A549 (cell line): ENCODE measurements at regions of chr14 and their contacts with region 1.

Region 1: DNA sequence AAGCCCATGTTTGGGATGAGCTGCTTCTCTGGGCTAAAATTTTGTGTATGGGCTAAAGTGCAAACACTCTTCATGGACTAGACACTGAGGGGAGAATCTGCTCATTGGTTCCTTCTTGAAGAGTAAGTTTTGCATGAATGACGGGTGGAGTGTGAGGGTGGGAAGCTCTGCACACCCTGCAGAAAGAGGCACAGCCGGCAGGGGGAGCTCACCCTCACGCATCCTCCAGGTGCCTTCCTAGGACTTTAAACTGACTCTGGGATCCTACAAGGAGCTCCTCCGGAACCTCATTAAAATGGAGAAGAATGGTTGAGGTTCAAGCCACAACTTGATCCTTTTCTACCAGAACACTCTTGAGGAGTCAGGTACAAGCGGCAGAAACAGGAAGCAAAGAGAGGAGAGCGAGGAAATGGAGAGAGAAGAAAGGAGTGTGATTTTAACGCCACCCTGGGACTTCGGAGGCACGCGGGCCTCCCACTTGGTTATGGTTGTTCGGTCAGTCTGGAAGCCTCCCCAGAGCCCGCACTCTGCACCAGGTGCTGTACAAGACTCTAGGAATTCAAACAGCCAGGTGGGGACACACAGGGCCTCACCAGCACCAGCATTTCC is 87.5 kb downstream of the SETD3 start:
- DNase-seq: peak; percentile 56 to 61
- ATAC-seq: peak; percentile 81 to 88
- H3K4me3 ChIP-seq: no peak overlapping the region
- H3K27ac ChIP-seq: no peak overlapping the region
- H3K4me1 ChIP-seq: peaks cover 5% of the 10 kb centered on the region; the same call in 1 of the 3 replicates
- CTCF ChIP-seq: peak; percentile 78
- EP300 ChIP-seq: no peak
- POLR2A ChIP-seq: no peak
- RAD21 ChIP-seq: peak in 1 of 2 experiments; percentile 37; a peak in 3 of 5 replicates

Region 2: DNA sequence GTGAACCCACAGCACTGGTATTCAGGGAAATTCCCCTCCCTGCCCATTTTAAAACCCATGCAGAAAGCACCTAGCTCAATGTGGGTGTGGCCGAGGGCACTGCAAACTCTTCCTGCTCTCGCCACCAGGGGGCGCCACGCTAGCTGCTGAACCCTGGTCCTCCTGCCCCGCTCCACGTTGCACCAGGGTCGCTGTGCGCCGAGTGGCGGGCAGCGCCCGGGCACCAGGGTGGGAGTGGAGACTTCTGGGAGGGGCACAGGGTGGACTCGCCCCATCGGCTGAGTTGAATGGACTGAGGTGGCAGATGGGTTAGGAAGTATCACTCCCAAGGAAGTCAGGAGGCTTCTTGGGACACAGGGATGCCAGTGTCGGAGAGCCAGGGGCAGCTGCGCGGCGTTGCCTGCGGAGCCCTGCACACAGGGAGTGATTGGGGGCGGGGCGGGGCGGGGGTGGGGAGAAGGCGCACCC is 73.0 kb before region 1 on chr14:
- CTCF ChIA-PET with region 1: interaction called, 20 read pairs
- POLR2A ChIA-PET with region 1: no interaction called
- DNase-seq: peak; percentile 71 to 77
- ATAC-seq: peak; percentile 54 to 80; a peak in 5 of 6 replicates
- H3K4me3 ChIP-seq: 0 out of 3 replicates have a peak overlapping the region, but pooled peaks have one; percentile 3
- H3K27ac ChIP-seq: peak overlapping the region; percentile 53 to 87
- H3K4me1 ChIP-seq: peaks cover 54% of the 10 kb centered on the region
- CTCF ChIP-seq: peak; percentile 91
- EP300 ChIP-seq: no peak
- POLR2A ChIP-seq: no peak
- RAD21 ChIP-seq: peak; percentile 48 to 59; a peak in 4 of 5 replicates

Region 3: GRCh38 chr14:99346470-99347080 is 46.6 kb before region 1 on chr14:
- CTCF ChIA-PET with region 1: interaction called, 10 read pairs
- POLR2A ChIA-PET with region 1: no interaction called
- DNase-seq: no peak
- ATAC-seq: no peak
- H3K4me3 ChIP-seq: no peak overlapping the region
- H3K27ac ChIP-seq: no peak overlapping the region
- H3K4me1 ChIP-seq: no peaks in the 10 kb centered on the region
- CTCF ChIP-seq: no peak
- EP300 ChIP-seq: no peak
- POLR2A ChIP-seq: no peak
- RAD21 ChIP-seq: no peak

Region 4: DNA sequence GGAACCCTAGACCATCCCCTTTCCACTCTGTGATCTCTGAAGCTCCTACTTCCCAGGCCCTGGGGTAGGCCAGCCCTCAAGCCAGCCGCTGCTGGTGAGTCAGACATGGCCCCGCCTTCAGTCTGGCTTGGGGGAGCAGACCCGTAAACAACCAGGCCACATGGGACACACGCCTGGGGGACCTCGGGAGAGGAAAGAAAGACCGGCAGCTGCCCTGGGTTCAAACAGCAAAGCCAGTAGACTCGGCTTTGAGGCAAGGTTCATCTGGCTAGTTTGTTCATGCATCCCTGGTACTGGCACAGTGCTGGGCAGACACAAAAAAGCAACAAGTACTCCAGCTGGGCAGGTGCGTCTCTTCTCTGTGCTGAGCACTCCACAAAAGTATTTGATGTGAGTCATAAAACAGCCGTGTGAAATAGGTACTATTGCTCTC is 14.4 kb before region 1 on chr14:
- CTCF ChIA-PET with region 1: interaction called, 150 read pairs
- POLR2A ChIA-PET with region 1: no interaction called
- DNase-seq: peak; percentile 72 to 78
- ATAC-seq: peak; percentile 82 to 85
- H3K4me3 ChIP-seq: no peak overlapping the region
- H3K27ac ChIP-seq: peak overlapping the region; percentile 72 to 85
- H3K4me1 ChIP-seq: peaks cover 38% of the 10 kb centered on the region
- CTCF ChIP-seq: no peak
- EP300 ChIP-seq: no peak
- POLR2A ChIP-seq: no peak
- RAD21 ChIP-seq: no peak

Region 5: GRCh38 chr14:99408286-99408970 is 15.3 kb after region 1 on chr14:
- CTCF ChIA-PET with region 1: interaction called, 178 read pairs
- POLR2A ChIA-PET with region 1: no interaction called
- DNase-seq: no peak
- ATAC-seq: no peak
- H3K4me3 ChIP-seq: no peak overlapping the region
- H3K27ac ChIP-seq: no peak overlapping the region
- H3K4me1 ChIP-seq: no peaks in the 10 kb centered on the region
- CTCF ChIP-seq: no peak
- EP300 ChIP-seq: no peak
- POLR2A ChIP-seq: no peak
- RAD21 ChIP-seq: no peak

Region 6: DNA sequence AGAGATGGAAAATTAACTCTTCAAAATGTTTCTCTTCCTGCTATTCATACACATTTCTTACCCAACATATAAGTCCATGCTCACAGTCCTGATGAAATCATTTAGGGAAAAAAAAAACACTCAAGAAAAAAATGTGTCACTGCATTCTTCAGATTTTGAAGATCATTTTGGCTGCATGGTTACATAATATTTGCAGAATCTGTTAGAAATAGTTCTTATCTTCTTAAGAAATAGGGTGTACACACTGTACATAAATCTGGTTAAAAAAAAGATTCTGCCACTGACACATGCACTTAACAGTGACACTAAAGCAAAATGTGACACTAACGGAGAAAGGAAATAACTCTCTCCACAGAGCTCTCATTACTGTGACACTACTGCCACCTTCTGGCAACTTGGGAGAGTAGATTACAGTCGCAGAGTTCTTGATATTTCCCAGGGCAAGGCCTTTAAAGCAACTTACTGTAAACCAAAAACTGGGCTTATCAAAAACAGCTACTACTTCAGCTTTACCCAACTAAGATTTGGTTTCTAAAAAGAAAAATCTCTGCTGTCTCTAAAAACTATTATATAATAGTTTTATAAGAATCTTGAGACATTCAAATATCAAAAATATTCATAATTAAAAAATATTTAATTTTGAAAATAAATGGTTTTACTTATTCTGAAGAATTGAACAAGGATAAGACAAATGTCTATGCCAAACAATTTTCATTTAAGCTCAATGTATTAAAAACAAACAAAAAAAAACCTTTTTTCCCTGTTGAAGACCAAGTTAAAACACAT is 22.5 kb after region 1 on chr14:
- CTCF ChIA-PET with region 1: interaction called, 178 read pairs
- POLR2A ChIA-PET with region 1: no interaction called
- DNase-seq: peak; percentile 73 to 83
- ATAC-seq: peak; percentile 91 to 96
- H3K4me3 ChIP-seq: no peak overlapping the region
- H3K27ac ChIP-seq: no peak overlapping the region
- H3K4me1 ChIP-seq: peaks cover 5% of the 10 kb centered on the region; the same call in 1 of the 3 replicates
- CTCF ChIP-seq: peak; percentile 93
- EP300 ChIP-seq: no peak
- POLR2A ChIP-seq: no peak
- RAD21 ChIP-seq: peak; percentile 91